CD8-positive, alpha-beta T cell (primary cell): ENCODE measurements at regions of chr3 and their contacts with region 1.

Region 1: GRCh38 chr3:51498876-51499738 is 708 bp downstream of the DCAF1 start:
- DNase-seq: peak; percentile 44 to 88 (median 77)
- ATAC-seq: peak; percentile 46
- H3K4me3 ChIP-seq: peak overlapping the region; percentile 86 to 87
- H3K4me3 Mint-ChIP-seq: peak overlapping the region; percentile 92
- H3K27ac ChIP-seq: peak overlapping the region; percentile 80 to 93
- H3K27ac Mint-ChIP-seq: peak overlapping the region; percentile 99
- H3K4me1 ChIP-seq: peaks cover 16% of the 10 kb centered on the region
- H3K4me1 Mint-ChIP-seq: peaks cover 24% of the 10 kb centered on the region
- H3K27me3 ChIP-seq: no peaks in the 10 kb centered on the region
- H3K27me3 Mint-ChIP-seq: no peaks in the 10 kb centered on the region
- CTCF ChIP-seq: no peak

Region 2: GRCh38 chr3:49929331-49930240 is 1569.5 kb before region 1 on chr3 and contains the start of gene MON1A:
- CTCF ChIA-PET with region 1: no interaction called
- POLR2A ChIA-PET with region 1: no interaction called
- intact Hi-C with region 1: loop called in 1 of 2 experiments (anchors 5 kb)
- DNase-seq: peak; percentile 64 to 91 (median 85)
- ATAC-seq: peak; percentile 94
- H3K4me3 ChIP-seq: peak within 1 kb of the TSS; percentile 80 to 99
- H3K4me3 Mint-ChIP-seq: peak within 1 kb of the TSS; percentile 82
- H3K27ac ChIP-seq: peak within 1 kb of the TSS; percentile 68 to 72
- H3K27ac Mint-ChIP-seq: peak within 1 kb of the TSS; percentile 79
- H3K4me1 ChIP-seq: peaks cover 12% of the 10 kb centered on the region
- H3K4me1 Mint-ChIP-seq: peaks cover 34% of the 10 kb centered on the region
- H3K27me3 ChIP-seq: no peaks in the 10 kb centered on the region
- H3K27me3 Mint-ChIP-seq: no peaks in the 10 kb centered on the region
- CTCF ChIP-seq: no peak
- total RNA-seq, gene MON1A: 1.2 TPM

Region 3: DNA sequence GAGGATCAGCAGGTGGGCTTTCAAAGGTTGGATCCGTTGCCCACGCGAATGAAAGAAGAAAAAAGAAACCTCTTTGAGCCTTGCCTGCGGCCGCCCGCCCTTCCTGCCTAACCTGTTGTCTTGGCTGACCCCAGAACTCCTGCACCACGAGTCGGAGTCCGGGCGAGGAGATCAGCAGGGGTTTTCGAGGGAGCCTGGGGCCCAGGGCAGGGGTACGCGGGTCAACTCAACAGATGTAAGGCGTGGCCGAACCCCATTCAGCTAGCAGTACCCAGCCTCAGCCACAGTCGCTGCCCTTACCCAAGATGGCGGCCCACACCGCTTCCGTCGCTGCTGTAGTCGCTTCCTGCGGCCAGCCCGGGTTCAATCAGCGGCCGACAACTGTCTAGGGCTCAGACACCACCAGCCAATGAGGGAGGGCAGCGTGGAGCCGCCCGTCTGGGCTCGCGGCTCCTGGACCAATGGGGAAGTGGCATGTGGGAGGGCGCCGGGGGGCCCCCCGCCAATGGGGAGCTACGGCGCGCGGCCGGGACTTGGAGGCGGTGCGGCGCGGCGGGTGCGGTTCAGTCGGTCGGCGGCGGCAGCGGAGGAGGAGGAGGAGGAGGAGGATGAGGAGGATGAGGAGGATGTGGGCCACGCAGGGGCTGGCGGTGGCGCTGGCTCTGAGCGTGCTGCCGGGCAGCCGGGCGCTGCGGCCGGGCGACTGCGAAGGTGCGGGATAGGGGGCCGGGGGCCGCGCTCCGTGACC is 114.2 kb before region 1 on chr3 and contains the start of gene MANF:
- CTCF ChIA-PET with region 1: interaction called, 21 read pairs
- POLR2A ChIA-PET with region 1: interaction called, 6 read pairs
- intact Hi-C with region 1: loop called (anchors 1 kb)
- DNase-seq: peak; percentile 94 to 99 (median 97)
- ATAC-seq: peak; percentile 93
- H3K4me3 ChIP-seq: peak within 1 kb of the TSS; percentile 86 to 94
- H3K4me3 Mint-ChIP-seq: peak within 1 kb of the TSS; percentile 99
- H3K27ac ChIP-seq: peak within 1 kb of the TSS; percentile 90 to 93
- H3K27ac Mint-ChIP-seq: peak within 1 kb of the TSS; percentile 100
- H3K4me1 ChIP-seq: peaks cover 35% of the 10 kb centered on the region
- H3K4me1 Mint-ChIP-seq: peaks cover 44% of the 10 kb centered on the region
- H3K27me3 ChIP-seq: no peaks in the 10 kb centered on the region
- H3K27me3 Mint-ChIP-seq: no peaks in the 10 kb centered on the region
- CTCF ChIP-seq: no peak
- total RNA-seq, gene MANF: 32.2 to 35.0 TPM

Region 4: DNA sequence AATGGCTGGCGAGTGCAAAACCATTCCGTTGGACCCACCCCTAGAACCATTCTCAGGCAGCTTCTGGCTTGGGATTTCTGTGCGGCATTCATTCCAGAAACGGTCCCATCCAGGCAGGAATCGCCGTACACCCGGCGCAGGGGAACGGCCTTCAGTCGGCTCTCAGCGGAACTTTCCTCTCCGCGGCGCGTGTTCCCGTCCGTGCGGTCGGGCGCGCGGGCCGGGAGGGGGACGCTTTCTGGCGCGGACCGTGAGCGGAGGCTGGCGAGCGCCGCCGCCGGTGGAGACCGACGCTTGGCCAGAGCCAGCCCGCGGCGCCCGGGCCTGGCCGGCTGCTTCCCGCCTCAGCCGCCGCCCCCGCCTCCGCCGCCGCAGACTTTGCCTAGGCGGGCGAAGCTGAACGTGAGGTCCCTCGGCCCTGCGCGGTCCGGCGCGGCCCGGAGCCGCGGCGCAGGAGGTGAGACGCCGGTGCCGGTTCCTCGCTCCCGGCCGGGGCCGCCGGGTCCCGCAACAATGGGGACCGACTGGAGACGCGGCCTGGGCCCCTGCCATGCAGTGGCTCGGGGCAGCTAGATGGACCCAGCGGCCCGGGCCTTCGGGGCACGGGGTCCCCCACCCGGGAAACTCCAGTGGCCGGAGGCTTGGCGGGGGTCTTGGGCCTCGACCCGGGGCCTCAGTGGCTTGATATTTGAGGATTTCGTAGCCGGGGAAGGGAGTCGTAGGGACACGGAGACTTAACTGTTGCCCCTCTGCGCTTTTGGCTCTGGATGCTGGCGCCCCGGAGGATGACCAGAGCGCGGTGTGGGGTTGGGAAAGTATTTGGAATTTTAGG is 39.6 kb after region 1 on chr3 and contains the start of gene RAD54L2:
- CTCF ChIA-PET with region 1: interaction called, 10 read pairs
- POLR2A ChIA-PET with region 1: interaction called, 6 read pairs
- intact Hi-C with region 1: loop called (anchors 1 kb)
- DNase-seq: peak; percentile 53 to 90 (median 78)
- ATAC-seq: peak; percentile 93
- H3K4me3 ChIP-seq: peak within 1 kb of the TSS; percentile 76 to 91
- H3K4me3 Mint-ChIP-seq: peak within 1 kb of the TSS; percentile 93
- H3K27ac ChIP-seq: peak within 1 kb of the TSS; percentile 67 to 76
- H3K27ac Mint-ChIP-seq: peak within 1 kb of the TSS; percentile 92
- H3K4me1 ChIP-seq: peaks cover 25% of the 10 kb centered on the region
- H3K4me1 Mint-ChIP-seq: peaks cover 43% of the 10 kb centered on the region
- H3K27me3 ChIP-seq: no peaks in the 10 kb centered on the region
- H3K27me3 Mint-ChIP-seq: no peaks in the 10 kb centered on the region
- CTCF ChIP-seq: peak; percentile 33
- total RNA-seq, gene RAD54L2: 34.8 to 37.4 TPM

Region 5: GRCh38 chr3:51682079-51682478 is 183.0 kb after region 1 on chr3:
- CTCF ChIA-PET with region 1: interaction called, 159 read pairs
- POLR2A ChIA-PET with region 1: interaction called, 21 read pairs
- intact Hi-C with region 1: loop called (anchors 1 kb)
- DNase-seq: peak; percentile 59 to 93 (median 71)
- ATAC-seq: peak; percentile 86
- H3K4me3 ChIP-seq: peak overlapping the region; percentile 24 to 27
- H3K4me3 Mint-ChIP-seq: peak overlapping the region; percentile 72
- H3K27ac ChIP-seq: peak overlapping the region; percentile 17 to 64
- H3K27ac Mint-ChIP-seq: peak overlapping the region; percentile 52
- H3K4me1 ChIP-seq: peaks cover 96% of the 10 kb centered on the region
- H3K4me1 Mint-ChIP-seq: peaks cover 91% of the 10 kb centered on the region
- H3K27me3 ChIP-seq: no peaks in the 10 kb centered on the region
- H3K27me3 Mint-ChIP-seq: no peaks in the 10 kb centered on the region
- CTCF ChIP-seq: peak; percentile 85

Region 6: GRCh38 chr3:51941798-51942602 is 442.9 kb after region 1 on chr3 and contains the starts of genes PARP3 and RRP9:
- CTCF ChIA-PET with region 1: interaction called, 3 read pairs
- POLR2A ChIA-PET with region 1: no interaction called
- intact Hi-C with region 1: loop called in 1 of 2 experiments (anchors 10 kb)
- DNase-seq: peak; percentile 98 to 100 (median 99)
- ATAC-seq: peak; percentile 93
- H3K4me3 ChIP-seq: peak within 1 kb of the TSS; percentile 78 to 80
- H3K4me3 Mint-ChIP-seq: peak within 1 kb of the TSS; percentile 94
- H3K27ac ChIP-seq: peak within 1 kb of the TSS; percentile 63 to 83
- H3K27ac Mint-ChIP-seq: peak within 1 kb of the TSS; percentile 90
- H3K4me1 ChIP-seq: peaks cover 31% of the 10 kb centered on the region
- H3K4me1 Mint-ChIP-seq: peaks cover 38% of the 10 kb centered on the region
- H3K27me3 ChIP-seq: no peaks in the 10 kb centered on the region
- H3K27me3 Mint-ChIP-seq: no peaks in the 10 kb centered on the region
- CTCF ChIP-seq: peak; percentile 92
- total RNA-seq, gene PARP3: 6.3 to 6.7 TPM
- total RNA-seq, gene RRP9: 8.1 to 8.3 TPM